ENCODE measurements at regions of chr3 and their contacts with region 1.

Region 1: GRCh38 chr3:197959898-197960693 is at the start of gene LMLN:
- DNase-seq: peak; percentile 96 to 97 (median 97)
- ATAC-seq: peak; percentile 97 to 99 (median 98)
- H3K4me3 ChIP-seq: peak within 1 kb of the TSS; percentile 64 to 87 (median 80)
- H3K27ac ChIP-seq: peak within 1 kb of the TSS; percentile 1 to 84 (median 79)
- H3K4me1 ChIP-seq: peaks cover 0 to 48% (median 18%) of the 10 kb centered on the region in 12 donors
- H3K27me3 ChIP-seq: no peaks in the 10 kb centered on the region
- CTCF ChIP-seq: no peak
- POLR2A ChIP-seq: peak in 1 of 2 donors; percentile 62
- total RNA-seq, gene LMLN: 4.1 to 17.1 (median 9.0) TPM

Region 2: DNA sequence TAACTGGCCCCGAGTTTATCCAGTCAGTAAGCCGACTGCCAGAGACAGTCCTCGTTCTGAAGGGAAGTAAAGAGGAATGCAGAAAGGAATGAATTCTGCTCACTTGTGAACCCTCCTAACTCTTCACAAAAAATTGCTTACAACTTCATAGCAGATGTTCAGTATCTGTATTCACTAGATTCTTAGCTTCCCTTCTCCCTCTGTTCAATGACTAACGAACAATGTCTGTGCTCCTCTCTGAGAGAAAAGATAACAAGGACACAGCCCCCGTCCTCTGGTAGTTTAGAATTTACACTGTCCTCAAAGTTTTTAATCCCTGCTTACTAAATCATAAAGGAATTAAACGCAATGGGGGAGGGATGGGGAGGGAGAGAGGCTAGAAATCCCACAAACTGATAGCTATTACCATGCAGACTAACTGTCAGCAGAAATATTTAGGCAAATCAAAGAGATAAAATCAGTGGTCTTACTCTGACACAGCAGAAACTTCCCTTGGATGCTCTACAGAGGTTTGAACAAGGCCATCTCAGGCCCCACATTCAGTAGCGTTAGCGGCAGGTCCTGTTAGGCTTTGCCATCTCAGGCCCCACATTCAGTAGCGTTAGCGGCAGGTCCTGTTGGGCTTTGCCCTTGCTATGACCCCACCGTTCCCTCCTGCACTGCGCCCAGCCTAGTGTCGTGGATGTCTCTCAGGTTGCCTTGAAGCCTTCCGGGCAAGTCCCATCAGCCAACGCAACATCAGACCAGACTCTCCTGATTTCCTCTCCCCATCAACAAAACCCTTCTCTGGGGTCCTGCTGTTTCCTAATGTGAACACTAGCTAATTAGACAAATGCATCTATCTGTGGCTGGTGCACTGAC is 1297.2 kb before region 1 on chr3:
- intact Hi-C with region 1: no loop called
- DNase-seq: no peak
- ATAC-seq: no peak
- H3K4me3 ChIP-seq: no peak overlapping the region
- H3K27ac ChIP-seq: no peak overlapping the region
- H3K4me1 ChIP-seq: peaks cover 0 to 10% (median 0%) of the 10 kb centered on the region in 12 donors
- H3K27me3 ChIP-seq: peaks cover 0 to 3% (median 0%) of the 10 kb centered on the region in 9 donors
- CTCF ChIP-seq: no peak
- POLR2A ChIP-seq: no peak

Region 3: GRCh38 chr3:197682713-197683112 is 277.4 kb before region 1 on chr3:
- intact Hi-C with region 1: no loop called
- DNase-seq: no peak
- ATAC-seq: no peak
- H3K4me3 ChIP-seq: no peak overlapping the region
- H3K27ac ChIP-seq: no peak overlapping the region
- H3K4me1 ChIP-seq: no peaks in the 10 kb centered on the region
- H3K27me3 ChIP-seq: no peaks in the 10 kb centered on the region
- CTCF ChIP-seq: no peak
- POLR2A ChIP-seq: no peak

Region 4: DNA sequence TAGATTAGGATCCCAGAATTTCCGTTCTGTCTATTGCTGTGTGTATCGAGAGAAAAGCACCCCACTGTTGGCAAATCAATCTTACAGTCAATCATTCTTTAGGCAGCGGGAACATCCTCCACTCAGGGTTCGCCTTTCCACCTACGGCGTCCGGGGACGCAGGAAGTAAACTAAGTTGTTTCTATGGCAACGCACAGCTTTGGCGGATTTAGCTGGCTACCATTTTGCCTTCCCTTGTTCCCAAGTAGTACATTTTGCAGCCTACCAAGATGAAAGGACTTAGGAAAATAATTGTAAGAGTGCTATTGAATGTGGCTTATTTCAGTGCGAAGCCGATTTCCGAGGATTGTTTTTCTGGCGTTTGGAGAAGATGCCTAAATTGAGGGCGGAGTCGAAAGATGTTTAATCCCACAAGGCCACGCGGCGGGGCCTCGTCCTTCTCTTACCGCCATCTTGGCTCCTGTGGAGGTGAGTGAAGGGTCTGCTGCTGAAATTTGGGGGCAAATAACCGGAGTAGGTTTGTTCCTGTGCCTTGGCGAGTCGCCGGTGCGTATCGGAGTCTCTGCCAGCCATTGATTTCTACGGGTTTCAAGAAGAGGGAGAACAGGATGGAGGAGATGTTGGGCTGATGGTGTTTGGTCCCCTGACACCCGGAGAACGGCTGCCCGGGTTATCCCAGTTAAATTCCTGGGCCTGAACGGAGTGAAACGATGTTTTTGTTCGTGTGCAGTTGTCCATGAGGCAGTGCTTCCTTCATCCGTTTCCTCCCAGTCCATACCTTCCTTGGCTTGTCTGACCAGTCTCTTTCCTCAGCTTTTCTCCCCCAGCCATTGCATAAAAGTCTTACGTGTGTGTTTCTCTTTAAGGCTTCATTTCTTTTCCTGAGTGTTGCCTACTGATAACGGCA is 10.1 kb before region 1 on chr3 and contains the start of gene RPL35A:
- intact Hi-C with region 1: loop called in 1 of 10 experiments (anchors 1 kb)
- DNase-seq: peak; percentile 86 to 92 (median 88)
- ATAC-seq: peak; percentile 81 to 89 (median 88)
- H3K4me3 ChIP-seq: peak within 1 kb of the TSS; percentile 57 to 87 (median 76)
- H3K27ac ChIP-seq: peak within 1 kb of the TSS; percentile 86 to 95 (median 90)
- H3K4me1 ChIP-seq: peaks cover 10 to 51% (median 39%) of the 10 kb centered on the region in 12 donors
- H3K27me3 ChIP-seq: no peaks in the 10 kb centered on the region
- CTCF ChIP-seq: no peak
- POLR2A ChIP-seq: peak; percentile 32 to 79
- total RNA-seq, gene RPL35A: 374 to 941 (median 729) TPM

Region 5: DNA sequence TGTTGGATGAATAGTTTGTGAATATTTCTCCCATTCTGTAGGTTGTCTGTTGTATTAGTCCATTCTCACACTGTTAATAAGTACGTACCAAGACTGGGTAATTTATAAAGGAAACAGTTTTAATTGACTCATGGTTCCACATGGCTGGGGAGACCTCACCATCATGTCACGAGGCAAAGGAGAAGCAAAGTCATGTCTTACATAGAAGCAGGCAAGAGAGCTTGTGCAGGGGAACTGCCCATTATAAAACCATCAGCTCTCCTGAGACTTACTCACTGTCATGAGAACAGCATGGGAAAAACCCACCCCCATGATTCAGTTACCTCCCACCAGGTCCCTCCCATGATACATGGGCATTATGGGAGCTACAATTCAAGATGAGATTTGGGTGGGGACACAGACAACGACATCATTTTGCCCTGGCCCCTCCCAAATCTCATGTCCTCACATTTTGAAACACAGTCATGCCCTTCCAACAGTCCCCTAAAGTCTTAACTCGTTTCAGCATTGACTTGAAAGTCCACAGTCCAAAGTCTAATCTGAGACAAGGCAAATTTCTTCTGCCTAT is 133.1 kb after region 1 on chr3:
- intact Hi-C with region 1: no loop called
- DNase-seq: no peak
- ATAC-seq: no peak
- H3K4me3 ChIP-seq: no peak overlapping the region
- H3K27ac ChIP-seq: no peak overlapping the region
- H3K4me1 ChIP-seq: peaks cover 0 to under 1% (median 0%) of the 10 kb centered on the region in 12 donors
- H3K27me3 ChIP-seq: peaks cover 0 to 77% (median 32%) of the 10 kb centered on the region in 9 donors
- CTCF ChIP-seq: no peak
- POLR2A ChIP-seq: no peak

Measured in heart left ventricle (tissue), 16 donors.